K562 (cell line): ENCODE measurements at regions of chr2 and their contacts with region 1.

Region 1: DNA sequence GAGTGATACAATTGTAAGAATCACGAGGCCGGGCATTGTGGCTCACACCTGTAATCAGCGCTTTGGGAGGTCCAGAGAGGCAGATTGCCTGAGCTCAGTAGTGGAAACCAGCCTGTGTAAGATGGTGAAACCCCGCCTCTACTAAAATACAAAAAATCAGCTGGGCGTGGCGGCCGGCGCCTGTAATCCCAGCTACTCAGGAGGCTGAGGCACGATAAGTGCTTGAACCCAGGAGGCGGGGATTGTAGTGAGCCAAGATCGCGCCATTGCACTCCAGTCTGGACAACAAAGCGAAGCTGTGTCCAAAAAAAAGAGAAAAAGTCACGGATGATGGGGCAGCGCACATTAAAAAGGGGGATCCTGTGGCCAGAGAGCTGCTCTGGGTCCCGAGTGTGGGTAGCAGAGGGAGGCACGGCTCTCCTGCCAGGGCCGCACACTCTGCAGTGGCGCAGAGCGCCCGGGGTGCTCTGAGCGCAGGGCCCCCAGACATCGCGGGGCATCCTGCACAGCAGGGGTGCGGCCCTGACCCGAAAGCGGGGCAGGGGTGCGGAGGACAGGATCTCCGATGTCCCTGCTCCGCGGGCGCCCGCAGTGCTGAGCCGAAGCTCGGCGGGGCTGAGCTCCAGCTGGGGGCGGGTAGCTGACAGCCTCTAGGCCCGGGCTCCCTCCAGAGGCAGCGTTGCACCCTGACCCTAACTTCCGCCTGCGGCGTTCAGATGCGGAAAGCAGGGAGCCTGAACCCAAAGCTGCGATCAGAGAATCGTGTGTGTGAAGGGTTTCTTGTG is 30.4 kb upstream of the RAB6D start:
- DNase-seq: peak; percentile 50 to 80 (median 71)
- ATAC-seq: peak; percentile 98
- H3K4me3 ChIP-seq: peak overlapping the region; percentile 47
- H3K27ac ChIP-seq: no peak overlapping the region
- H3K4me1 ChIP-seq: peaks cover 0 to 16% of the 10 kb centered on the region in 2 experiments; a peak in 2 of 5 replicates
- H3K27me3 ChIP-seq: peaks cover 0 to 20% of the 10 kb centered on the region in 2 experiments; a peak in 4 of 5 replicates
- CTCF ChIP-seq: peak; percentile 47 to 70 (median 58); a peak in 5 of 6 replicates
- EP300 ChIP-seq: no peak
- POLR2A ChIP-seq: 0 out of 2 replicates have a peak, but pooled peaks have one; percentile 14
- RAD21 ChIP-seq: peak; percentile 16 to 66; a peak in 3 of 4 replicates

Region 2: DNA sequence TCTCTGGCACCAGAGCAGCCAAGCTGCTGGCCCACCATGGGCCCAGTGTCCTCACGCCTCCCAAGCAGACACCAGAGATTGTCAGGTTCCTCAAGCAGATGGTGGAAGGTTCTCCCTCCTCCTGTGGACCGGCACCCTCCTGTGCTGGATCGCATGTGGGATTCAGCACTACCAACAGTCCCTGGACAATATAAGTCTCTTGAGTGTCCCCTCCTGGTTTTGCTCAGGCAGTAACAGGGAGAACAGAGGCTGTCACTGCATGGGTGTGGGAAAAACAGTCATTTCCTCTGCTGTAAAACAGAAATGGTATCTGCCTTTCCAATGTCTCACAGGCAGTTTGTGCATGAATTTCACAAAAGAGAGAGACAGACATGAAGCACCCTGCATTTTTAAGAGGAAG is 1148.4 kb before region 1 on chr2:
- CTCF ChIA-PET with region 1: no interaction called
- POLR2A ChIA-PET with region 1: no interaction called
- in situ Hi-C with region 1: loop called (anchors 5 kb)
- intact Hi-C with region 1: no loop called
- DNase-seq: no peak
- ATAC-seq: peak; percentile 47; the same call in 1 of the 3 replicates
- H3K4me3 ChIP-seq: no peak overlapping the region
- H3K27ac ChIP-seq: no peak overlapping the region
- H3K4me1 ChIP-seq: no peaks in the 10 kb centered on the region
- H3K27me3 ChIP-seq: peaks cover 6 to 23% of the 10 kb centered on the region in 2 experiments; a peak in 4 of 5 replicates
- CTCF ChIP-seq: no peak
- EP300 ChIP-seq: no peak
- POLR2A ChIP-seq: no peak
- RAD21 ChIP-seq: no peak

Region 3: GRCh38 chr2:131004446-131005209 is 389.7 kb before region 1 on chr2:
- CTCF ChIA-PET with region 1: no interaction called
- POLR2A ChIA-PET with region 1: no interaction called
- in situ Hi-C with region 1: no loop called
- intact Hi-C with region 1: loop called (anchors 10 kb)
- DNase-seq: no peak
- ATAC-seq: no peak
- H3K4me3 ChIP-seq: no peak overlapping the region
- H3K27ac ChIP-seq: no peak overlapping the region
- H3K4me1 ChIP-seq: no peaks in the 10 kb centered on the region
- H3K27me3 ChIP-seq: peaks cover 40 to 52% of the 10 kb centered on the region in 2 experiments
- CTCF ChIP-seq: no peak
- EP300 ChIP-seq: no peak
- POLR2A ChIP-seq: no peak
- RAD21 ChIP-seq: no peak

Region 4: GRCh38 chr2:131168538-131168937 is 225.8 kb before region 1 on chr2:
- CTCF ChIA-PET with region 1: no interaction called
- POLR2A ChIA-PET with region 1: no interaction called
- in situ Hi-C with region 1: no loop called
- intact Hi-C with region 1: no loop called
- DNase-seq: no peak
- ATAC-seq: no peak
- H3K4me3 ChIP-seq: no peak overlapping the region
- H3K27ac ChIP-seq: no peak overlapping the region
- H3K4me1 ChIP-seq: no peaks in the 10 kb centered on the region
- H3K27me3 ChIP-seq: no peaks in the 10 kb centered on the region
- CTCF ChIP-seq: no peak
- EP300 ChIP-seq: no peak
- POLR2A ChIP-seq: no peak
- RAD21 ChIP-seq: no peak

Region 5: DNA sequence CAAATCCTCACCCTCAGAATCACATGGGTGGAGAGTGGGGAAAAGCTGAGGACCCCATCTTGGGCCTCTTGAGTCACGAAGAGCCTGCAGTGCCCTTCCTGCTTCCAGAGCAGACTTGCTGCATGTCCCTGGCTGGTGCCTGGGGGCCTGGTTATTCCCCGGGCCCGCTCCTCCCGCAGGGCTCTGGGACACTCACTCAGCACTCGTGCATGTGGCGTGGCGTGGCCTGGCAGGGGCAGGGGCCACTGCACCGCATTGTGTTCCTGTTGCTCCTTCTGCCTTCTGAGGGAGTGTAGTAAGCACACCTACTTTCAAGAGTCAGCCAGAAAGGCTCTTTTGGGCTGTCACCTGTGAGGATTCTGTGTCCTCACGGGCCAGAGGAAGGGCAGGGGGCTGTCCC is 115.3 kb after region 1 on chr2:
- CTCF ChIA-PET with region 1: no interaction called
- POLR2A ChIA-PET with region 1: no interaction called
- in situ Hi-C with region 1: no loop called
- intact Hi-C with region 1: no loop called
- DNase-seq: no peak
- ATAC-seq: no peak
- H3K4me3 ChIP-seq: no peak overlapping the region
- H3K27ac ChIP-seq: no peak overlapping the region
- H3K4me1 ChIP-seq: no peaks in the 10 kb centered on the region; a peak in 1 of 5 replicates
- H3K27me3 ChIP-seq: no peaks in the 10 kb centered on the region
- CTCF ChIP-seq: no peak
- EP300 ChIP-seq: no peak
- POLR2A ChIP-seq: no peak
- RAD21 ChIP-seq: no peak